ENCODE measurements at regions of chr20 and their contacts with region 1.

Region 1: GRCh38 chr20:25341716-25342680 is 48.6 kb downstream of the ABHD12 start:
- DNase-seq: no peak
- H3K4me3 ChIP-seq: no peak overlapping the region
- H3K27ac ChIP-seq: no peak overlapping the region
- H3K4me1 ChIP-seq: peaks cover 0 to 9% (median 4%) of the 10 kb centered on the region in 4 experiments; a peak in 4 of 7 replicates
- H3K27me3 ChIP-seq: no peaks in the 10 kb centered on the region
- CTCF ChIP-seq: no peak
- EP300 ChIP-seq: no peak
- POLR2A ChIP-seq: no peak
- RAD21 ChIP-seq: no peak

Region 2: DNA sequence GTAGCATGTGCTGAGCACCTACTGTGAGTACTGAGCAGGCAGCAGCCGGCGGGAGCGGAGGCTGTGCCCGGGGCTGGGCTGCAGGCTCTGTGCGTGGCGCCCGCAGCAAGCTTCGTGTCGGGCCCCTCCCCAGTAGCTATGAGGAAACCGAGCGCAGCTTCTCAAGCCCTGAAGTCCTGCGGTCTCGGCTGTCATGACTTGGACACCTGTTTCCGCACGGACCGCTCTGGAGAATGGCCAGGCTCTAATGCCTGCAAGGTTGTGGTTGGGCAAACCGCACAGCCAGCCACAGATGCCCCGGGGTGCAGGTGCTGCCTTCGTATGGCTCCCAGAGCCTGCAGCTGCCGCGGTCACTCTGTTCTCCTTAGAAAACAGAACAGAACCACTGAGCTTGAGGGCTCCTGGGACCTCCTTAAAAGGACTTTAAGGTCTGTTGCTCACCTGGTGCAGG is 60.4 kb before region 1 on chr20:
- CTCF ChIA-PET with region 1: no interaction called
- POLR2A ChIA-PET with region 1: no interaction called
- DNase-seq: no peak
- H3K4me3 ChIP-seq: no peak overlapping the region
- H3K27ac ChIP-seq: no peak overlapping the region
- H3K4me1 ChIP-seq: no peaks in the 10 kb centered on the region
- H3K27me3 ChIP-seq: no peaks in the 10 kb centered on the region
- CTCF ChIP-seq: no peak
- EP300 ChIP-seq: no peak
- POLR2A ChIP-seq: no peak
- RAD21 ChIP-seq: no peak

Region 3: DNA sequence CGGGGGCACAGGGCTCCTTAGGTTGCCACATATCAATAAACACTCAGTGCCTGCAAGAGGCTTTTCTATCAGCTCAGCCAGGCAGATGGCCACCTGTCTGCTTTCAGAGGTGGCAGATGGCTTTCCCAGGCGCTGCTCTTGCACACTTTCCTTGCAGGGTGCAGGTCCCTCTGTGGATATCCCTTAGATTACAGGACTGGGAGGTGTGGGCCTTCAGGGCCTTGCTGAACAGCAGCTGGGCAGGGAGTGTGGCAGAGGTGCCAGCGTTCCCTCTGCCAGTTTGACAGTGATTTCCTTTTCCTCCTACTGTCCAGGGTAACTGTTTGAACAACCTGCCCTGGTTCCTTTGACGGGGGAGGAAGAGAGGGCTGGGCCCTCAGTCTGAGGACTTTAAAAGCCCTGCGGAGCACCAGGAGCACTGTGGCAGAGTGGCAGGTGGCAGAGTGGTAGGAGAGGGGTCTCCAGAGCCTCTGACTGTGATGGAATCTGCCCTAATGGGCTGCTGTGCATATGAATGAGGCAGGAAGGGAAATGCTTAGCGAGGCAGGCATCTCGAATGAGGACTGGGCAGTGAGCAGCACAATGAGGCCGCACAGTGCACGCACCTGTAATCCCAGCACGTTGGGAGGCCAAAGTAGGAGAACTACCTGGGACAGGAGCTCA is 14.4 kb after region 1 on chr20:
- CTCF ChIA-PET with region 1: interaction called, 14 read pairs
- POLR2A ChIA-PET with region 1: interaction called, 3 read pairs
- DNase-seq: peak; percentile 58 to 65
- H3K4me3 ChIP-seq: peak overlapping the region in 1 of 4 experiments; percentile 0; a peak in 1 of 8 replicates
- H3K27ac ChIP-seq: peak overlapping the region; percentile 74
- H3K4me1 ChIP-seq: peaks cover 23 to 38% (median 30%) of the 10 kb centered on the region in 4 experiments
- H3K27me3 ChIP-seq: no peaks in the 10 kb centered on the region
- CTCF ChIP-seq: no peak
- EP300 ChIP-seq: peak in 1 of 2 experiments; percentile 69; a peak in 1 of 3 replicates
- POLR2A ChIP-seq: peak; percentile 29 to 49; a peak in 2 of 3 replicates
- RAD21 ChIP-seq: no peak

Region 4: GRCh38 chr20:25382704-25383565 is 40.9 kb after region 1 on chr20:
- CTCF ChIA-PET with region 1: no interaction called
- POLR2A ChIA-PET with region 1: no interaction called
- DNase-seq: no peak
- H3K4me3 ChIP-seq: no peak overlapping the region
- H3K27ac ChIP-seq: no peak overlapping the region
- H3K4me1 ChIP-seq: no peaks in the 10 kb centered on the region
- H3K27me3 ChIP-seq: no peaks in the 10 kb centered on the region
- CTCF ChIP-seq: no peak
- EP300 ChIP-seq: no peak
- POLR2A ChIP-seq: no peak
- RAD21 ChIP-seq: no peak

Measured in H1 (cell line).